Mammary epithelial cell (primary cell): ENCODE measurements at regions of chr3 and their contacts with region 1.

Region 1: DNA sequence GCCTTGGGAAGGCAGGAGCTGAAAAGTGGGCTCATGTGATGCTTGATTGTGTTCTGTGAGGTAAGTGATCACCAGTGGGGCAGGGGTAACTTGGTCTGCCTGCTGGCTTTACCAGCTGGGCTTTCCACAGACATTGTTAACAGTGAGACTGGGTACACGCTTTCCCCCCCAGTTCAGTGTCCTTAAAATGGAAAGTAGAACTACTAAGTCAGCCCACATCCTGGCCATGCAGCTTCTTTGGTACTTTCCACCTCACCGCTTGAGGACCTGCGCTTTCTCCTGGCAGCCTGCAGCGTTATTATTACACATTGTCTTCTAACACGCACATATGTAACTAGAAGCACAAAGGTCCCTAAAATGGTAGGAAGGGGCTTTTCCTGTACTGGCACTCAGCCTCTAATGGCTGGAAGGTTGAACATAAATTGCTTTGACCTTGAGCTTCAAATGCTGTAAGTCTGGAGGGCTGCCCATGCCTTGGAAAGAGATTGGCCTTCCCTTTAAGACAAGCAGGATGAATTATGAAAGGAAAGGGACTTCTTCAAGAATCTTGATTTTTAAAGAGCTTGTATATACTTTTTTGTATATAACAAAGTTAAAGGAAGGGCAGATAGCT is 216.1 kb upstream of the ROPN1 start:
- DNase-seq: no peak
- H3K4me3 ChIP-seq: no peak overlapping the region
- H3K27ac ChIP-seq: no peak overlapping the region
- H3K4me1 ChIP-seq: no peaks in the 10 kb centered on the region
- H3K27me3 ChIP-seq: no peaks in the 10 kb centered on the region
- CTCF ChIP-seq: no peak

Region 2: GRCh38 chr3:124168262-124168661 is 39.7 kb before region 1 on chr3:
- CTCF ChIA-PET with region 1: no interaction called
- dilution Hi-C with region 1: no loop called
- in situ Hi-C with region 1: no loop called
- intact Hi-C with region 1: loop called (anchors 5 kb)
- DNase-seq: peak; percentile 13
- H3K4me3 ChIP-seq: no peak overlapping the region
- H3K27ac ChIP-seq: no peak overlapping the region
- H3K4me1 ChIP-seq: no peaks in the 10 kb centered on the region
- H3K27me3 ChIP-seq: peaks cover 3% of the 10 kb centered on the region
- CTCF ChIP-seq: no peak

Region 3: DNA sequence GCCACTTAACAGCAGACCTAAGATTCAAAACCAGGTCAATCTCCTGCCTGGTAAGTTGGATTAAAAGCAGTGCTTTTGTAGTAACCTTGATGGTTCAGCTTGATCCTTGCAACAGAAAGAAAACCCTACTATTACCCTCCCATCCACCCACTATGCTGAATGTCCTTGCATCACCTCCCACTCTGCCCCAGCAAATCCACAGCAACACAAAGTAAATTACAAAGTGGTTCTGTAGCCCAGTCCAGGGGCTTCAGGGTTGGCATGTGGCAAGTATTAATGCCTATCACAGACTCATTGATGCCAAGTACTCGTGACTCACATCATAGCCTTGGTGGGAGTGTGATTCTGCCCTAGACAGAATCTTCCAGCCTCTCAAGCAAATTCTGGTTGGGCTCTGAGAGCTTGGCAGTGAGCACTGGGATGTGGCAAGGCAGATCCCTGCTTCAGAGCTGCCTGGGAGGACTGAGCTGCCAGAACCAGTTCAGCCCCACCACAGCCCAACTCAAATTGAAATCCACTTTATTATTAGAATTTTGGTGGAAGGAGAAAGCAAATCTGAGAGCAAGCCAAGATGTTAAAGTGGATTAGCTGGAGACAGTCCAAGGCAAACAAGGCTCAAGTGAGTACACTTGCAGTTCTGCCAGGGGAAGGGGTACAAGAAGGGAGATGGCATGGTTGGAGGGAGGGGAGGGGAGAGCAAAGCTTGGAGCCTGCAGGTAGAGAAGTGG is 296.5 kb after region 1 on chr3:
- CTCF ChIA-PET with region 1: no interaction called
- dilution Hi-C with region 1: no loop called
- in situ Hi-C with region 1: no loop called
- intact Hi-C with region 1: no loop called
- DNase-seq: peak; percentile 38
- H3K4me3 ChIP-seq: no peak overlapping the region
- H3K27ac ChIP-seq: no peak overlapping the region
- H3K4me1 ChIP-seq: peaks cover 7% of the 10 kb centered on the region
- H3K27me3 ChIP-seq: no peaks in the 10 kb centered on the region
- CTCF ChIP-seq: no peak